CD14-positive monocyte (primary cell): ENCODE measurements at regions of chr14 and their contacts with region 1.

Region 1: GRCh38 chr14:31207755-31208545 is at the start of gene HECTD1:
- DNase-seq: peak; percentile 71 to 83 (median 78)
- H3K4me3 ChIP-seq: peak within 1 kb of the TSS; percentile 64 to 80 (median 72)
- H3K4me3 Mint-ChIP-seq: peak within 1 kb of the TSS; percentile 92 to 97
- H3K27ac ChIP-seq: peak within 1 kb of the TSS; percentile 93 to 99
- H3K27ac Mint-ChIP-seq: peak within 1 kb of the TSS; percentile 97 to 100 (median 98)
- H3K4me1 ChIP-seq: peaks cover 18 to 26% of the 10 kb centered on the region in 2 donors
- H3K4me1 Mint-ChIP-seq: peaks cover 33% of the 10 kb centered on the region
- H3K27me3 ChIP-seq: no peaks in the 10 kb centered on the region
- H3K27me3 Mint-ChIP-seq: peaks cover 0 to 3% (median 0%) of the 10 kb centered on the region in 3 donors
- CTCF ChIP-seq: peak; percentile 95
- polyA plus RNA-seq, gene HECTD1: 12.7 to 55.9 (median 21.5) TPM

Region 2: DNA sequence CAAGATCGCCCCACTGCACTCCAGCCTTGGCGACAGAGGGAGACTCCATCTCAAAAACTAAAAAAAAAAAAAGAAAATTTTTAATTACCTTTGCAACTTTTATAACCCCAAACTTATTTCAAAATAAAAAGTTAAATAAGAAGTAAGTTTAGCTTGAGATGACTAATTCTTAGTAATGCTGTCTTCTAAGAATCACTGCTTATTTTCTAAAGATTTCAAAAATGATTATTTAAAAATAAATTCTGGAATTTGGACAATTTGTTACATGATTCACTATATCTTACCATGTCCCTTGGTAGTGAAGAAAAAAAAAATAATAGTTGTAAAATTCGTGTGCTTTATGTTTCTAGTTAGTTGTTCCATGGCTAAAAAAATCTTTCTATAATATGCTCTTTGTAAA is 11.2 kb after region 1 on chr14:
- intact Hi-C with region 1: no loop called
- DNase-seq: no peak
- H3K4me3 ChIP-seq: no peak overlapping the region
- H3K4me3 Mint-ChIP-seq: no peak overlapping the region
- H3K27ac ChIP-seq: no peak overlapping the region
- H3K27ac Mint-ChIP-seq: no peak overlapping the region
- H3K4me1 ChIP-seq: no peaks in the 10 kb centered on the region
- H3K4me1 Mint-ChIP-seq: peaks cover 3% of the 10 kb centered on the region
- H3K27me3 ChIP-seq: no peaks in the 10 kb centered on the region
- H3K27me3 Mint-ChIP-seq: peaks cover 0 to 3% (median 0%) of the 10 kb centered on the region in 3 donors
- CTCF ChIP-seq: no peak

Region 3: DNA sequence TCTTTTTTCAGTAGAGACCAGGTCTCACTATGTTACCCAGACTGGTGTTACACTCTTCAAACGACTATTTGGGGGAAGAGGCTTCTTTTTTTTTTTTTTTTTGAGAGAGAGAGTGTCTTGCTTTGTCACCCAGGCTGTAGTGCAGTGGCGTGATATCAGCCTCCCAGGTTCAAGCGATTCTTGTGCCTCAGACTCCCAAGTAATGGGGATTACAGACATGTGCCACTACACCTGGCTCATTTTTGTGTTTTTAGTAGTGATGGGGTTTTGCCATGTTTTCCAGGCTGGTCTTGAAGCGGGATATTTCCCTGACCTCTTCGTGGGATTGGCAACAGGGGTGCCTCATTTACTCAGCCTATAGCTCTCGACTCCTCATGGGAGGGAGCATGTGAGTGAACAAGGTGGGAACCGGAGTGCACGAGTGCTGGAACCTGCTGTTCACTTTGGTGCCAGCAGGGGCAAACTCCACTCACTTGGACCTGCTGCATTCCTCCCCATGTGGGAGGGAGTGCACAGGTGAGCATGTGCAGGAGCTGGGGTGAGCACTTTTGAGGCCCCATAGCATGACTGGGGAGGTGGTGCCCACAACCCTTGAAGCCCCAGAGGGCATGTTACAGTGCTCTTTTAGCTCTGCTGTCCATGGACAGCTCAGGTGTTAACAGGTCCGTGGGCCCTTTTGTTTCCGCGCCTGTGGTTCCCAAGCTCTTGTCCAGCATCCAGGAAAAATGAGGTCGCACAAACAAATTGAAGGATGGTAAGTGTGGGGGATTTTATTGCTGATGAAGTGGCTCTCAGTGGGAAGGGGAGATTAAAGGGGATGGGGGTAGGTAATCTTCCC is 78.7 kb after region 1 on chr14:
- intact Hi-C with region 1: loop called in 1 of 2 experiments (anchors 5 kb)
- DNase-seq: no peak
- H3K4me3 ChIP-seq: no peak overlapping the region
- H3K4me3 Mint-ChIP-seq: no peak overlapping the region
- H3K27ac ChIP-seq: no peak overlapping the region
- H3K27ac Mint-ChIP-seq: no peak overlapping the region
- H3K4me1 ChIP-seq: peaks cover 24 to 30% of the 10 kb centered on the region in 2 donors
- H3K4me1 Mint-ChIP-seq: peaks cover 19% of the 10 kb centered on the region
- H3K27me3 ChIP-seq: no peaks in the 10 kb centered on the region
- H3K27me3 Mint-ChIP-seq: no peaks in the 10 kb centered on the region
- CTCF ChIP-seq: peak; percentile 64

Region 4: GRCh38 chr14:31357279-31357678 is 149.3 kb after region 1 on chr14:
- intact Hi-C with region 1: loop called in 1 of 2 experiments (anchors 10 kb)
- DNase-seq: peak in 2 of 3 donors; percentile 11 to 29
- H3K4me3 ChIP-seq: no peak overlapping the region
- H3K4me3 Mint-ChIP-seq: no peak overlapping the region
- H3K27ac ChIP-seq: no peak overlapping the region
- H3K27ac Mint-ChIP-seq: no peak overlapping the region
- H3K4me1 ChIP-seq: peaks cover 13 to 23% of the 10 kb centered on the region in 2 donors
- H3K4me1 Mint-ChIP-seq: peaks cover 11% of the 10 kb centered on the region
- H3K27me3 ChIP-seq: no peaks in the 10 kb centered on the region
- H3K27me3 Mint-ChIP-seq: peaks cover 0 to 9% (median 2%) of the 10 kb centered on the region in 3 donors
- CTCF ChIP-seq: no peak